ENCODE measurements at regions of chr1 and their contacts with region 1.

Region 1: DNA sequence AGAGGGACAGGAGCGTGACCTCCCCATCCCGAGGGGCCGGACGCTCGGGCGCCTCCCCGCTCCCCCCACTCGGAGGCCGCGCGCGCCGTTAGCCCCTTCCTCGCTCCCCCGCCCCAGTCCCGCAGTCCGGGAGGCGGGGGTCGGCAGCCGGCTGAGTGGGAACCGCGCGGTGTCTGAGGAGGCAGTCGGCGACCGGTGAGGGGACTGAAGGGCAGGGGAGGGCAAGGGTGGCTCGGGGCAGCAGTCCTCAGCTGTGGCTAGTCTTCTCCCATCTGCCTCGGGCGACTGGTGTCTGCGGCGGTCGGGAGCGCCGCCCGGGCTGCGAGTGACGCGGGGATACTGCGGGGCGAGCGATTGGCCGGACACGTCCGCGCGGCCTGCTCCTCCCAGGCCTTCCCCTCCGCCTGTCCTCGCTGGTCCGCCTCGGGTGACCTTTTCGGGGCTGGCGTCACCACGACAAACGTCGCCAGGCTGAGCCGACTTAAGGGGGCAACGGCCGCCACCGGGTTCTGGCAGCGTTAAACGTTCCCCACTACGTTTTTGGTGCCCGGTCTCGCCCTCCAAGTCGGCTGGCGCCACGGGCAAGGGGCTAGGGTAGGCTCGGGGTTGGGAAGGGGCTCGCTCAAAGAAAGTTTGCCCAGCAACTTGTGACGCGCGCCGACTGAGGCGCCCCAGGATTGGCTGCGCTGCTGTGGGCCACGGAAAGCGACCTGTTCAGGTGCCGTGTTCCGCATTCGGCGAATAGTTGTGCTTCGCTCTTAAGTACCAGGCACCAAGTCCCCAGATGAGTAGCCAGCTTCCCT is 534 bp downstream of the ZNF672 start:
- DNase-seq: peak; percentile 93
- ATAC-seq: peak; percentile 85 to 88

Region 2: GRCh38 chr1:247535402-247535801 is 1303.2 kb before region 1 on chr1:
- intact Hi-C with region 1: no loop called
- DNase-seq: no peak
- ATAC-seq: no peak

Region 3: GRCh38 chr1:248858891-248859889 is 20.6 kb after region 1 on chr1 and contains the start of gene ZNF692:
- intact Hi-C with region 1: loop called in 1 of 2 experiments (anchors 1 kb)
- DNase-seq: peak; percentile 99
- ATAC-seq: peak; percentile 93 to 94
- total RNA-seq, gene ZNF692: 16.3 to 22.3 TPM

Measured in left cardiac atrium (tissue), 4 donors.